ENCODE measurements at regions of chr11 and their contacts with region 1.

Region 1: DNA sequence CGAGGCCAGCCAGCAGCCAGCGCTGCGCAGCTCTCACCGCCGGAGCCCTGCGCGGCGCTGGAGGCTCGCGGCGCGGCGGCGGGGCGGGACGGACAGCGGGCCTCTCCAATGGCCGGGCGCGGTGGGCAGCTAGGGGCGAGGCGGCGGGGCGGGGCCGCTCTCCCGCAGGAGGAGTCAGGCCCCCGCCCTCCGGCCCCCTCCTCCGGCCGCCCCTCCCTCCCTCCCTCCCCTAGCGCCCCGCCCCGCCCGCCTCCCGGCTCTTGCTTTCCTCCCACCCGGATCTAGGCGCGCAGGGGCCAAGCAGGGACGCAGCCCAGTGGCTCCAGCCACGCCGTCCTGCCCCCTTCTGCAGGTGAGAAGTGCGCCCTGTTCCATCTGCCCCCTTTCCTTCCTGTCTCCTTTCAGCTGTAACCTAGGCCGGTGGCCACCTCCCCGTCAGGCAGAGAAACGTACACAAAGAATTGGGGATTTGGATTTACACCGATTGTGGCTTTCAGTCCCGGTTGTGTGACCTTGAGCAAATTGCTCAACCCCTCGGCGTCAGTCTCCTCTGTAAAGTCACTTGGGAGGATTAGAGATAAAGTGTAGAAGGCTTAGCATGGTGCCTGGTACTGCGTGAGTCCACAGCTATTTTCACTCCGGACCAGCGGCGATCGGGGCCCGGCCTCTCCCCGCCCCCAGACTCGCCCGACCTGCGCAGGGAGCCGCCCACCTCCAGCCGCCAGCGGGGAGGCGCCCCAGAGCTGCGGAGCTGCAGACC is at the start of gene FZD4:
- DNase-seq: peak; percentile 95
- ATAC-seq: peak; percentile 92
- total RNA-seq, gene FZD4: 26.9 TPM

Region 2: DNA sequence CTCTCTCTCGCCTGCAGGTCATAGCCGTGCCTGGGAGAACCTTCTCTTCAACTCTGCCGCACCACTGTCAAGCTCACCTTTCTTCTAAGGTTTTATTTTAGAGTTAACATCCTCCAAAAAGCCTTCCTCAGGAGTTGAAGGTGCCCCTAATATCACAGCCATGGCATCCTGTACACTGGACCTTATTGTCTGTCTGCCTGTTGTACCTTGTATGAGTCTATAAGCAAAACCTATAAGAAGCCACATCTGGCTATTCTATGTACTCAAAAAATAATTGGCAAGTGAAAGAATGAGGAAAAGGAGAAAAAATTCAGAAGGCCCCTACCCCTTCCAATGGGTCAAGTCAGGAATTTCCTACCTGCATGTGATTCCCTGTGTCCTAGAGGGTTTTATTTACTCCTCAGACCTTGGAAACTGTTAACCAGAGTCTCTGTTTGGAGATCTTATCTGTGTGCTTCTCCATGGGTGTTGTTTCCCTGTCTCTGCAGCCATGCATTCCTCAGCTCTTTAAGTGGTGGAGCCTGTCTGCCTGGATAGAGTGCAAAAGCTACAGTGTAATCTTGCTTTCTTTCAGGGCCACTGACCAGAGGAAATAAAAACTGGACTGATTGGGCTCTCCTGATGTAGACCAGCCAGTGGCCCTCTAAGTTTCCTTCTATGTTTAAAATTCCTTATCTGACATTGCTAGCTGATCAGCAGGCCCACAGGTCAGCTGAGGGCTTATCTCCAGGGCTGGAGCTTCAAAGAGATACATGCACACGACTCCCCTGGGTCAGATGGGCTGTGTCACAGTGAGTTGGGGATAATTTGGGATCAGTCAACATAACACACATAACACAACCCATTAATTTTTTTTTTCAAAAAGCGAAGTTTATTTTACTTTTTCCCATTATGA is 44.6 kb after region 1 on chr11:
- intact Hi-C with region 1: no loop called
- DNase-seq: no peak
- ATAC-seq: peak; percentile 82

Region 3: DNA sequence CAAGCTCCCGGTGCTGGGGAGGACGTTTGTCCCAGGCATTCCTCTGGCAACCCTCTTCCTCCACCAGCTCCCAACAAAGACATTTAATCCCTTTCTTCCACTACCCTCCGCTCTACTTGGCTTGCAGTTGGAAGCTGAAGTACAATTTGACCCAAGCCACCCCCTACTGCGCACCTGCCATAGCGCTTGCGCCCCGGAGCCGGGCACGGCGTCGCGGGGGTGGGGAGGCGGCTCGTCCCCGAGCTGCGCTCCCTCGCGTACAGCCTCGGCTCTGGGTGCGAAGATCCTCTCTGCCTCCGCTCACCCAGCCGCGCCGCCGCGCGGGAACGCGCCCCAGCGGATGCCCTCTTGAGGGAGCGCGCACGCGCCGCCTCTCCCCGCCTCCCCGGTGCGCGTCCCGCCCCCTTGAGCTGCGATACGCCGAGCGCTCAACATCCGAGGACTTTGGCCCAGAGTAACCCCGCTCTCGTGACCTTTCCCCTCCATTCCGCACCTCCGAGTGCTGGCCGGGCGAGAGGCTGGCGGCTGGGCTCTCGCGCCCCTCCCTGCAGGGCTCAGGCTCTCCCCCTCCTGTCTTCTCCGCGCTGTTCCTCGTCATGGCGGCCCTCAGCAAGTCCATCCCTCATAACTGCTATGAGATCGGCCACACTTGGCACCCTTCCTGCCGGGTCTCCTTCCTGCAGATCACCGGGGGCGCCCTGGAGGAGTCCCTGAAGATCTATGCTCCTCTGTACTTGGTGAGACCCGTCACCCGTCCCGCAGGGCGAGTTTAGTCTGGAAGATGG is 82.1 kb after region 1 on chr11 and contains the start of gene TMEM135:
- intact Hi-C with region 1: loop called (anchors 5 kb)
- DNase-seq: peak; percentile 97
- ATAC-seq: peak; percentile 98
- total RNA-seq, gene TMEM135: 17.2 TPM

Measured in Right ventricle myocardium superior (tissue), 1 donor.